WTC11 (cell line): ENCODE measurements at regions of chr3 and their contacts with region 1.

Region 1: DNA sequence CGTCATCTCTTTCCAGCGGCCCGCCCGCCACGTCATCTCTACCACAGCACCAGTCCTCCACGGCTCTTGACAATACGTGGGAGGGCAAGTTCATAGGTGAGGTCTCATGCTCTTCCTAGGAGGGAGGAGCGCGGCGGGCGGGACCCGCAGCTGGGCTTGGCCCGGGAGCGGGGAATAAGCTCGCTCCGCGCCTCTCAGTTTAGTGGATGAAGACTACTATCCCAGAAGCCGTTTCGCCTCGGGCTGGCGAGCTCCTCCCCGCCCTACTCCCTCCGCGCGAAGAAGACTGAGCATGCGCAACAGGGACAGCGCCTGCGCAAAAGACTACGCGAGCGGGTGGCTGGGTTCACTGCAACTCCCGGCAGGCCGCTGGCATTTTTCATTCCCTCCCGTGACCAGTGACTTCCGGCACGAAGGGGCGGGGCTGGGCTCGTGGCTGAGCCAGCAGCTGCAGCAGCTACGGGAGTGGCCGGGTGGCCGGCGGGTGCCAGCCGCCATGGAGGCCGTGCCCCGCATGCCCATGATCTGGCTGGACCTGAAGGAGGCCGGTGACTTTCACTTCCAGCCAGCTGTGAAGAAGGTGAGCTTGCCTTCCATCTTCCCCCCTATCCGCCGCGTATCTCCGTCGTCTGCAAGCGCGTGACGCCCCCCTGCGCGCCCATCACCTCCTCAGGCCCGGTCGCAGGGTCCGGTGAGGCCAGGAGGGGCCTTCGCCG is at the start of gene PTPN23:
- DNase-seq: peak; percentile 98
- ATAC-seq: peak; percentile 79
- H3K4me3 Mint-ChIP-seq: peak within 1 kb of the TSS; percentile 100
- H3K27ac Mint-ChIP-seq: peak within 1 kb of the TSS; percentile 100
- H3K4me1 Mint-ChIP-seq: peaks cover 21% of the 10 kb centered on the region
- H3K27me3 Mint-ChIP-seq: no peaks in the 10 kb centered on the region
- CTCF ChIP-seq: no peak
- total RNA-seq, gene PTPN23: 44.1 to 53.5 TPM (median 49.8 TPM) in 3 replicates

Region 2: GRCh38 chr3:46711305-46711704 is 669.5 kb before region 1 on chr3:
- CTCF ChIA-PET with region 1: no interaction called
- POLR2A ChIA-PET with region 1: interaction called, 11 read pairs
- DNase-seq: peak; percentile 1
- ATAC-seq: no peak
- H3K4me3 Mint-ChIP-seq: no peak overlapping the region
- H3K27ac Mint-ChIP-seq: no peak overlapping the region
- H3K4me1 Mint-ChIP-seq: peaks cover 5% of the 10 kb centered on the region
- H3K27me3 Mint-ChIP-seq: peaks cover 2% of the 10 kb centered on the region; the same call in 1 of the 2 replicates
- CTCF ChIP-seq: no peak

Region 3: GRCh38 chr3:47296562-47297302 is 84.0 kb before region 1 on chr3:
- CTCF ChIA-PET with region 1: no interaction called
- POLR2A ChIA-PET with region 1: no interaction called
- DNase-seq: no peak
- ATAC-seq: no peak; the same call in 1 of the 2 replicates
- H3K4me3 Mint-ChIP-seq: no peak overlapping the region
- H3K27ac Mint-ChIP-seq: peak overlapping the region; percentile 28
- H3K4me1 Mint-ChIP-seq: peaks cover 13% of the 10 kb centered on the region
- H3K27me3 Mint-ChIP-seq: no peaks in the 10 kb centered on the region
- CTCF ChIP-seq: no peak